H1 (cell line): ENCODE measurements at regions of chr5 and their contacts with region 1.

Region 1: GRCh38 chr5:173925448-173926071 is 37.4 kb downstream of the CPEB4 start:
- DNase-seq: no peak
- H3K4me3 ChIP-seq: no peak overlapping the region
- H3K27ac ChIP-seq: no peak overlapping the region
- H3K4me1 ChIP-seq: peaks cover 0 to 17% (median 4%) of the 10 kb centered on the region in 4 experiments; a peak in 4 of 7 replicates
- H3K27me3 ChIP-seq: no peaks in the 10 kb centered on the region
- CTCF ChIP-seq: peak; percentile 55 to 60 (median 58)
- EP300 ChIP-seq: no peak
- POLR2A ChIP-seq: no peak
- RAD21 ChIP-seq: peak; percentile 50 to 59

Region 2: GRCh38 chr5:173941758-173942401 is 16.3 kb after region 1 on chr5:
- CTCF ChIA-PET with region 1: interaction called, 10 read pairs
- POLR2A ChIA-PET with region 1: no interaction called
- DNase-seq: peak in 1 of 2 experiments; percentile 33
- H3K4me3 ChIP-seq: peak overlapping the region in 1 of 4 experiments; percentile 37; a peak in 1 of 8 replicates
- H3K27ac ChIP-seq: peak overlapping the region; percentile 61; the same call in 1 of the 2 replicates
- H3K4me1 ChIP-seq: peaks cover 0 to 11% (median 7%) of the 10 kb centered on the region in 4 experiments; a peak in 4 of 7 replicates
- H3K27me3 ChIP-seq: no peaks in the 10 kb centered on the region
- CTCF ChIP-seq: no peak
- EP300 ChIP-seq: no peak
- POLR2A ChIP-seq: peak in 1 of 2 experiments; percentile 53; a peak in 1 of 3 replicates
- RAD21 ChIP-seq: no peak

Region 3: GRCh38 chr5:173984218-173984617 is 58.7 kb after region 1 on chr5:
- CTCF ChIA-PET with region 1: interaction called, 11 read pairs
- POLR2A ChIA-PET with region 1: no interaction called
- DNase-seq: peak in 1 of 2 experiments; percentile 50
- H3K4me3 ChIP-seq: no peak overlapping the region
- H3K27ac ChIP-seq: no peak overlapping the region
- H3K4me1 ChIP-seq: peaks cover 4 to 8% (median 5%) of the 10 kb centered on the region in 4 experiments; a peak in 4 of 7 replicates
- H3K27me3 ChIP-seq: no peaks in the 10 kb centered on the region
- CTCF ChIP-seq: peak; percentile 8 to 87 (median 80)
- EP300 ChIP-seq: no peak
- POLR2A ChIP-seq: no peak
- RAD21 ChIP-seq: peak; percentile 96